ENCODE measurements at regions of chr11 and their contacts with region 1.

Region 1: GRCh38 chr11:47248664-47249377 is at the start of gene ACP2:
- DNase-seq: peak; percentile 90
- H3K4me3 Mint-ChIP-seq: peak within 1 kb of the TSS; percentile 91
- H3K27ac Mint-ChIP-seq: peak within 1 kb of the TSS; percentile 95
- H3K4me1 Mint-ChIP-seq: peaks cover 24% of the 10 kb centered on the region
- H3K27me3 Mint-ChIP-seq: no peaks in the 10 kb centered on the region
- total RNA-seq, gene ACP2: 28.0 to 31.7 TPM

Region 2: GRCh38 chr11:47233989-47234668 is 14.7 kb before region 1 on chr11:
- CTCF ChIA-PET with region 1: interaction called, 44 read pairs
- POLR2A ChIA-PET with region 1: interaction called, 4 read pairs
- DNase-seq: peak; percentile 27
- H3K4me3 Mint-ChIP-seq: peak overlapping the region; percentile 46
- H3K27ac Mint-ChIP-seq: peak overlapping the region; percentile 86
- H3K4me1 Mint-ChIP-seq: peaks cover 34% of the 10 kb centered on the region
- H3K27me3 Mint-ChIP-seq: no peaks in the 10 kb centered on the region

Region 3: DNA sequence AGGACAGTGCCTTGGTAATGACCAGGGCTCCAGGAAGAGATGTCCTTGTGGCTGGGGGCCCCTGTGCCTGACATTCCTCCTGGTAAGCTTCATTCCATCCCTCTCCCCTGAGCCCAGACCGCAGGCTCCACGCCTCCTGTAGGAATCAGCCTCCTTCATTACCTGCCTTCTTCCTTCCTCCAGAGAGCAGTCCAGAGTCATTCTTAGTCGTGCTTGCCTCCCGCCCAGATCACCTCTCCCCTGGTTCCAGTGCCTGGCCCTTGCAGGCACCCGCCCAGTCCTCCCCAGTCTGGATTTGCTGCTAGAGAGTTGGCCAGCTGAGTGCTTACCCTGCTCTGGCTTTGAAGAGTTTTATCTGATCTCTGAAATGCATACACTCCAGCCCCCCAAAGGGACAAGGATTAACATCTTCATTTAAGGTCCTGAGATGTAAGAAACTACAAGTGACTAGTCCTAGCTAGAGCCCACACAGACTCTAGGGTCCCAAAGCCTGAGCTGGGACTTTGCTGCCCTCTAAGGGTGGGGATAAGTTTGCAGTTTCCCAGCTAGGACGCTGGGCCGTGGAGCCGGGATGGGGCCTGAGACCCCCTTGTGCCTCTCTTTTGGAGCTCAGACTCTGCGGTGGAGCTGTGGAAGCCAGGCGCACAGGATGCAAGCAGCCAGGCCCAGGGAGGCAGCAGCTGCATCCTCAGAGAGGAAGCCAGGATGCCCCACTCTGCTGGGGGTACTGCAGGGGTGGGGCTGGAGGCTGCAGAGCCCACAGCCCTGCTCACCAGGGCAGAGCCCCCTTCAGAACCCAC is 10.6 kb after region 1 on chr11:
- CTCF ChIA-PET with region 1: interaction called, 48 read pairs
- POLR2A ChIA-PET with region 1: interaction called, 4 read pairs
- DNase-seq: peak; percentile 43
- H3K4me3 Mint-ChIP-seq: no peak overlapping the region
- H3K27ac Mint-ChIP-seq: peak overlapping the region; percentile 28
- H3K4me1 Mint-ChIP-seq: peaks cover 28% of the 10 kb centered on the region
- H3K27me3 Mint-ChIP-seq: no peaks in the 10 kb centered on the region

Region 4: GRCh38 chr11:47264521-47264920 is 15.7 kb after region 1 on chr11:
- CTCF ChIA-PET with region 1: interaction called, 48 read pairs
- POLR2A ChIA-PET with region 1: interaction called, 4 read pairs
- DNase-seq: no peak
- H3K4me3 Mint-ChIP-seq: no peak overlapping the region
- H3K27ac Mint-ChIP-seq: peak overlapping the region; percentile 86
- H3K4me1 Mint-ChIP-seq: peaks cover 49% of the 10 kb centered on the region
- H3K27me3 Mint-ChIP-seq: no peaks in the 10 kb centered on the region

Region 5: GRCh38 chr11:47448566-47449427 is 200.0 kb after region 1 on chr11 and contains the start of gene RAPSN:
- CTCF ChIA-PET with region 1: no interaction called
- POLR2A ChIA-PET with region 1: no interaction called
- DNase-seq: no peak
- H3K4me3 Mint-ChIP-seq: no peak within 1 kb of the TSS
- H3K27ac Mint-ChIP-seq: no peak within 1 kb of the TSS
- H3K4me1 Mint-ChIP-seq: no peaks in the 10 kb centered on the region
- H3K27me3 Mint-ChIP-seq: no peaks in the 10 kb centered on the region
- total RNA-seq, gene RAPSN: 0.48 to 0.50 TPM

Region 6: GRCh38 chr11:47485110-47485509 is 236.3 kb after region 1 on chr11:
- CTCF ChIA-PET with region 1: no interaction called
- POLR2A ChIA-PET with region 1: no interaction called
- DNase-seq: no peak
- H3K4me3 Mint-ChIP-seq: no peak overlapping the region
- H3K27ac Mint-ChIP-seq: no peak overlapping the region
- H3K4me1 Mint-ChIP-seq: peaks cover 7% of the 10 kb centered on the region
- H3K27me3 Mint-ChIP-seq: no peaks in the 10 kb centered on the region